Left cardiac atrium (tissue), 4 donors: ENCODE measurements at regions of chr22 and their contacts with region 1.

Region 1: GRCh38 chr22:44080936-44081861 is 57.1 kb downstream of the PARVB start:
- DNase-seq: peak; percentile 82
- ATAC-seq: peak in 1 of 2 donors; percentile 35

Region 2: GRCh38 chr22:43867839-43868652 is 213.2 kb before region 1 on chr22:
- intact Hi-C with region 1: no loop called
- DNase-seq: peak; percentile 61
- ATAC-seq: peak; percentile 52 to 71

Region 3: DNA sequence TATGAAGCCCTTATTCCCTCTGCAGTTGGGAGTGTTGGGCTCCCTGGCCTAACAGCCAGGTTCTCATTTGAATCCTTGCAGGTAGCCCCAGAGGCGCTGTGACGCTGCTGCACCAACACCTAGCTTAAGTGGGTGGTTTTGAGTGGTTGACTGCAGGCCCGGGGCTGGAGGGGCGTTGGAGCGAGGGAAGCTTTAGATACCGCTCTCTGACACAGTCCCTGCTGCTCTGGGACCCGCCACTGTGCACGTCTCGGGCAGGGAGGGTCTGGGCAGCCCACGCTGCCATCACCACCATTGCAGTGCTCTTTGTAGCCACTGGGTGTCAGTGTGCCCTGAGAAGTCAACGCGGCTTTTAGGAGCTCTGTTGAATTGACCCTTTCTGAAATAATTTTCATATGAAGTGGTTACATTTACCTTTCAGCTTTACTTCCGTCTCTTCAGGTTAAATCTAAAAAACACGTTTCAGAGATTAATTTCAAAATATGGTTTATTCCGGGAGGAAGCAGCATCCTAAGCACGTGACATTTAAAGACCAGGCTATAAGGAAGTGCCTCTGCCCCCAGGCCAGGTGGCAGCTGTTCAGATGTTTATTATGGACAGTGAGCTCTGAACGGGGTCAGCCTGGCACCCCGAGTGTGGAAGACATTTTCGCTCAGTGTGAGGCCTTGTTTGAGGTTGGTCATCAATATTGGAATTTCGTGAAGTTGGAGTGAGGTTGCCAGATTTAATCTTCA is 88.0 kb before region 1 on chr22:
- intact Hi-C with region 1: loop called (anchors 2 to 5 kb)
- DNase-seq: peak; percentile 58
- ATAC-seq: peak; percentile 75 to 76

Region 4: DNA sequence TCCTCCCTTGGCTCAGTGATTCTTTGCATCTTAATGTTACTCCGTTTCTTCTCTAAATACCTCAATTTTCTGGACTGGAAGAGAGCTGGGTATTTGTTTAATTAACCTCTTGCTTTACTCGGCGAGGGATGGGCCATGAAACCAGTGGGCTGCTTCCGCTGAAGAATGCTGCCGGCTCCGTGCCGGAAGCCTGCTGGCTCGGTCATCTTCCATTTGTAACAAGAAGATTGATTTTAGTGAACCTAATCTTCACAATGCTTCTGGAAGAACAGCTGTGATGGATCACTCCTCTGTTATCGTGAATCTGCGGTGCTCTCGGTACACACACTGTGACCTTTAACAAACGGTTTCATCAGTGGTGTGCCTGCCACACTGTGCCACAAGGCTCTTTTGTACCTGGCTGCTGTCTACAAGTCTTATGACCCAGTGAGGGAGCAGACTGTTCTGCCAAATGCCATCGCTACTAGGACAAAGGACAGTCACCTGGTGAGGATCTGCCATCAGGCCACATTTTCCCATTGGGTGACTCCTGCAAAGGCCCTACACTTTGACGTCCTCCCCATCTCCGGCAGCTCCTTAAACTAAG is 82.4 kb before region 1 on chr22:
- intact Hi-C with region 1: loop called (anchors 2 to 5 kb)
- DNase-seq: peak; percentile 40
- ATAC-seq: peak; percentile 35 to 58

Region 5: DNA sequence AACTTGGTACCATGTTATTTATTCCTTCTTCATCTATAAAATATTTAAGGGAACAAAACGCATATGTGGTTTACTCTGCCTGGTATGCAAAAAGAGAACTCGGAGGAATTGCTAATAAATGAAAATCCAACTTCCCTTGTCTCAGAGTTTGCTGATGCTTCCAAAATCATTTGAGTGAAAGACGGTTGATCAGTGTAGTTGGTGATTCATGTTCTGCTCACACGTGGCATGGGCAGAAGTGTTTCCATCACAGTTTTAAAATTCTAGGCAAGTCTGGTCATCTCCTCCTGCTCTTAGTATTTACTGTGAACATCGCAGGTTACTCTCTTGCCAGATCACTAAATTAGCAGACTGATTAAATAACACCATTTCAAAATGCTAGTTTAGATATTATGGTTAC is 69.0 kb before region 1 on chr22:
- intact Hi-C with region 1: no loop called
- DNase-seq: no peak
- ATAC-seq: peak in 1 of 2 donors; percentile 53

Region 6: DNA sequence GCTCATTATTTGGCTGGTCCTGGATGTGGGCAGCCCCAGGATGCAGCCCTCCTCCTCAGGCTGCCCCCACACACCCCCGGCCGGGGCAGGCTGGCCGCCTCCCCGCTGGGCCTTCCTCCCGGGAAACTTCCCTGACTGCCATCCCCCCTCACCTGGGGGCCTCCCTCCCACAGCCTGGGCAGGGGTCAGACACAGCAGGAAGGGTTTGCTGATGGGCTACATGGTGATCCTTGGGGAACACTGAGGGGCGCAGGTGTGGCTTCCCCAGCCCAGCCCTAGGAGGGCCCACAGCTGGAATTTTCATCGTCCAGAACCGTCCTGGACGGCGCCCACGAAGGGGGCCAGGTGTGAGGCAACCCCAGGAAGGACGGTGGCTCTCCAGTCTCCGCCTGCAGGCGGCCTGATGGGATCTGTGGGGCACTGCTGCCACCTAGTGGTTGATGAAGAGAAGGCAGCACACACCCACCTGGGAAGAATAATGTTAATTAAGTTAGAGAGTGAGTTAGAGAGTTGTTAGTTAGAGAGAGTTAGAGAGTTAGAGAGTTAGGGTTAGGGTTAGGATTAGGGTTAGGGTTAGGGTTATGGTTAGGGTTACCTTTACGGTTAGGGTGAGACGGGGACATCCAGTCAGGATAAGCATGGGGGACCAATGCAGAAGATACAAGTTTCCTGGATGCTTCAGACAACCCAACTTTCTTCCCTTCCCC is 544.9 kb after region 1 on chr22:
- intact Hi-C with region 1: loop called (anchors 5 to 10 kb)
- DNase-seq: peak; percentile 75
- ATAC-seq: peak; percentile 75 to 81